PC-9 (cell line): ENCODE measurements at regions of chr2 and their contacts with region 1.

Region 1: GRCh38 chr2:172465417-172466334 is 38.3 kb downstream of the ITGA6 start:
- DNase-seq: peak; percentile 78 to 91
- H3K4me3 ChIP-seq: no peak overlapping the region
- H3K27ac ChIP-seq: peak overlapping the region; percentile 61
- H3K4me1 ChIP-seq: peaks cover 49% of the 10 kb centered on the region
- H3K27me3 ChIP-seq: no peaks in the 10 kb centered on the region
- CTCF ChIP-seq: peak; percentile 100

Region 2: DNA sequence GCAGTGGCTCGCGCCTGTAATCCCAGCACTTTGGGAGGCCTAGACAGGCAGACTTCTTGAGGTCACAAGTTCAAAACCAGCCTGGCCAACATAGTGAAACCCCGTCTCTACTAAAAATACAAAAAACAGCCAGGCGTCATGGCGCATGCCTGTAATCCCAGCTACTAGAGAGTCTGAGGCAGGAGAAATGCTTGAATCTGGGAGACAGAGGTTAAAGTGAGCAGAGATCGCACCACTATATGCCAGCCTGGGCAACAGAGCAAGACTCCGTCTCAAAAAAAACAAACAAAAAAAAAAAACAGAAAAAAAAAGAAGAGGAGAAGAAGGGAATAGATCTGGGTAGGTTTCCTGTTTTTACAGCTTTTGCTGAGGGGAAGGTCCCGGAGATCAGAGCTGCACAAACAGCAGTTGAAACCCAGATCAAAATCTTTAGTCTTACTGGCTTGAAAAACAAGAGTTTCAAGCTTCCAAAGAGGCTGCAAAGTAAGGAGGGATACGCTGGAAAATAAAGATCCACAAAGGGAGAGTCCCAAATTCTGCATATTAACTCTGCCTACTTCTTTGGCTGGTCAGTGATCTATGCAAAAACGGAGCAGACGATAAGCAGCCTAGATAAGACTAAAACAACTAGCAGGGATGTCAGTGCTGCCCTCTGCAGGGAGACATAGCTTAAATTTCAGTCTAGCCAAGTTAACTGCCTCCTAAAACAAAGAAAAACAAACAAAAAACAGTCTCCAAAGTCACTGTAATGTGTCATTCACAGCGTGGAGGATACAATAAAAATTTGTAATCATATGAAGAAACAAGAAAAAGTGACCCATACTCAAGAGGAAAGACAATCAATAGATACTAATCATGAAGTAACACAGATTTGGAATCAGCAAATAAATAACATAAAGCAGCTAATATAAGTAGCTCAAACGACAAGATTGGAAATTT is 1379.1 kb before region 1 on chr2:
- CTCF ChIA-PET with region 1: interaction called, 40 read pairs
- POLR2A ChIA-PET with region 1: no interaction called
- intact Hi-C with region 1: loop called (anchors 1 kb)
- DNase-seq: peak; percentile 52 to 59
- H3K4me3 ChIP-seq: no peak overlapping the region
- H3K27ac ChIP-seq: no peak overlapping the region
- H3K4me1 ChIP-seq: no peaks in the 10 kb centered on the region
- H3K27me3 ChIP-seq: no peaks in the 10 kb centered on the region
- CTCF ChIP-seq: peak; percentile 84

Region 3: DNA sequence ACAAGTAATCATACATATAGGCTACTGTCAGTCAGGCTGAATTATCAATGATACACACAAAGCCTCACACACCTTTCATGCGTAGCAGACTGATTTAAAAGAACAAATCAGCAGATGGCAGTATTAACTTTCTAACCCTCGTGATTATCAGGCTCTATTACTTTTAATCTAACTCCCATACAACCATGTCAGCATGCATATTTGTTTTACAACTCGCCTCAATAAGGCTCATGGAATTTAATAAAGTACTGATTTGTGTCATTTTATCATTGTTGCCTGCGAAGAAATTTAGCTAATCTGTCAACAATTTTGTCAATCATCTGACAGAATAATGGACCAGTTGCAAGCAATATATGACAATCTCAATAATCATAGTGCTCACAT is 654.4 kb before region 1 on chr2:
- CTCF ChIA-PET with region 1: no interaction called
- POLR2A ChIA-PET with region 1: no interaction called
- intact Hi-C with region 1: loop called (anchors 1 kb)
- DNase-seq: peak in 1 of 2 experiments; percentile 55
- H3K4me3 ChIP-seq: no peak overlapping the region
- H3K27ac ChIP-seq: no peak overlapping the region
- H3K4me1 ChIP-seq: peaks cover 19% of the 10 kb centered on the region
- H3K27me3 ChIP-seq: no peaks in the 10 kb centered on the region
- CTCF ChIP-seq: peak; percentile 70

Region 4: GRCh38 chr2:172102391-172103278 is 363.0 kb before region 1 on chr2 and contains the start of gene DLX2:
- CTCF ChIA-PET with region 1: no interaction called
- POLR2A ChIA-PET with region 1: no interaction called
- intact Hi-C with region 1: loop called (anchors 1 kb)
- DNase-seq: peak; percentile 93
- H3K4me3 ChIP-seq: peak within 1 kb of the TSS; percentile 73
- H3K27ac ChIP-seq: no peak within 1 kb of the TSS
- H3K4me1 ChIP-seq: peaks cover 34% of the 10 kb centered on the region
- H3K27me3 ChIP-seq: no peaks in the 10 kb centered on the region
- CTCF ChIP-seq: no peak
- total RNA-seq, gene DLX2: 0.65 and 0.76 TPM in 2 replicates

Region 5: DNA sequence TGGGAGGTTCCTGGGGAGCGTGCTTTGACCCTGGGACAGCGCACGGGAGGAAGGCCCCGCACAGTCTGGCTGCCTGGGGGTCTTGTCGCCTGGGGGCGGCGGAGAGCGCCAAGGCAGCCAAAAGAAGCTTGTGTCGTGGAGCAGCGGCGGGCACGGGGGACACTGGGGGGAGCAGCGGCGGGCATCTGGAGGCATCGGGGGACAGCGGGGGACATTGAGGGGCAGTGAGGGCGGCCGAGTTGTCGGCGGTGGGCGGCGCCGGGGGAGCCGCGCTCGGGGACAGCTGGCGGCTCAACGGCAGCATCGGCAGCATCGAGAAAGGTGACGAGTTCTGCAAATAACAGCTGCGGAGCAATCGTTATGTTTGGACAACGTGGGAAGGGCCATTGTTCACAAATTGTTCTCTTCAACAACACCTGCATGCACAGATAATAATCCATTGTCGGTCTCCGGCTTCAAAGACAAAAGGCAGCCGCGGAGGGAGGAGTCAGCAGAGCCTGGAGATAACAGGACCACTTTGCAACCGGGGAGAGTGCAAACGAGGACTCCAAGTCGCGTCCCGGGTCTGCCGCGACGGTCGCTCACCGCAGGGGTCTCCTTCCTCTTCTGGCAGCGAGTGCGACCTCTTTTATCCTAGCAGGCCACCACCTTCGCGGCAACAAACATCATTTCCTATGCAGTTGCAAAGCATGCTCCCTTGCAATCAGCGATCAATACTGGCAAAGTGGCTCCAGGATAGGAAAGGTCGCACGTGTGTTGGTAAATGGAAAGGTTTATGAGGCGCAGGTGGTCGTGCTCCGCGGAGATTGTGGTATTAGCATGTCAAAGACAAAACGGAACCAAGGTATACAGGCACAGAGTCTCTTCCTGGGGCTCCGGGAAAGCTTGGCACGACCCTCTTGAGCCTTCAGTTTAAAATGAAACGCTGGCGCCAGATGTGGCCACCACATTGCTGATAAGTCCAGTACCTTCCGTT is 230.7 kb before region 1 on chr2:
- CTCF ChIA-PET with region 1: interaction called, 18 read pairs
- POLR2A ChIA-PET with region 1: no interaction called
- intact Hi-C with region 1: loop called (anchors 1 kb)
- DNase-seq: no peak
- H3K4me3 ChIP-seq: no peak overlapping the region
- H3K27ac ChIP-seq: no peak overlapping the region
- H3K4me1 ChIP-seq: peaks cover 30% of the 10 kb centered on the region
- H3K27me3 ChIP-seq: no peaks in the 10 kb centered on the region
- CTCF ChIP-seq: no peak

Region 6: DNA sequence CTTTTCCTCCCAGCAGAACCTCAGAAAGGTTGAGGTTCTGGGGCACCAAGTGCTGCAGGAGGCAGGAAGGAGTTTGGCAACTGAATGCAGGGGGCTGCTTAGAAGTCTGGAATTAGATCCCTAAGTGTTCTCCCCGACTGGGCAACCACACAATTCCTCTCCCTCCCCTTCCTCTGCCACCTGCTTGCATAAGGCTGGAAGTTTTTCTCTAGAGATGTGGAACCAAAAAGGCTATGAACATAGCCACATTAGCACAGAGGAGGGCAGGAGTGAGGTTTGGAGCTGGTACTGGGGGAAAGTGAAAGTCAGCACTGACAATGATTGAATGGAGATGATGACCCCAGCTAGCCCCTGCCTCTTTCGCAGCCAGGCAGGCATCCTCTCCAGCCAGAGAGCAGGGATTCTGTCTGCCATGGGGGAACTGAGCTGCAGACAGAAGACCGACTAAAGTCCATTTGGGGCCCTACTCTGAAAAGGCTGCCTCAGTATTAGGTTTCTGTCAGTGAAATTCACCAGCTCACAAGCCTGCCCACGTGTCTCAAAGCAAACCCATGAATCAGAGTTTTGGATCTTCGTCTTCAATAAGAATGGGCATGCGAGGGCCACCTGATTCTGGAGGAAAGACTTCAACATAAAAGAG is 126.2 kb before region 1 on chr2:
- CTCF ChIA-PET with region 1: interaction called, 10 read pairs
- POLR2A ChIA-PET with region 1: no interaction called
- intact Hi-C with region 1: loop called (anchors 2 kb)
- DNase-seq: no peak
- H3K4me3 ChIP-seq: no peak overlapping the region
- H3K27ac ChIP-seq: no peak overlapping the region
- H3K4me1 ChIP-seq: peaks cover 8% of the 10 kb centered on the region
- H3K27me3 ChIP-seq: no peaks in the 10 kb centered on the region
- CTCF ChIP-seq: no peak

Region 7: DNA sequence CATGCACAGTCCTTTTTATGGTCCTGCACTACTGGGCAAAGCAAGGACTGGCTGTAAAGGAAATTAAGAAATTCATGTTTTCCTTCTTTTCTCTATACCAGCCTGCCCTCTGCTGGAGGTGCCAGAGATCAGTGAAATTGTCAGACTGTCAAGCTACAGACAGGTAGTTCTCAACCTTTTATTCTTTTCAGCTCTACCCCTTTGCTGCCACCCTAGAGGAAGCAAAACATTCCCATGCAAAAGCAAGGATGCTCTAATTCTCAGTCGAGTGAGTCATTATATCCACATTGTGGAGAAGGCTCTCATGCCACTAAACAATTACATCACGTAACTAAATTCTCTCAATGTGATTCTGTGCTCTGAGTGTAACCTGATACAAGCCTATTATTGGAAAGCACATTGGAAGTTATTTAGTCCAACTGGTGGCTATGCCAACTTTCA is 244.9 kb after region 1 on chr2:
- CTCF ChIA-PET with region 1: interaction called, 3 read pairs
- POLR2A ChIA-PET with region 1: interaction called, 8 read pairs
- intact Hi-C with region 1: loop called (anchors 1 kb)
- DNase-seq: peak; percentile 82 to 100
- H3K4me3 ChIP-seq: no peak overlapping the region
- H3K27ac ChIP-seq: no peak overlapping the region
- H3K4me1 ChIP-seq: peaks cover 10% of the 10 kb centered on the region
- H3K27me3 ChIP-seq: no peaks in the 10 kb centered on the region
- CTCF ChIP-seq: peak; percentile 99